ENCODE measurements at regions of chr1 and their contacts with region 1.

Region 1: GRCh38 chr1:229258031-229258756 is 12.7 kb upstream of the RAB4A start:
- DNase-seq: peak; percentile 24 to 82 (median 67)
- ATAC-seq: peak; percentile 25
- H3K4me3 ChIP-seq: no peak overlapping the region
- H3K4me3 Mint-ChIP-seq: peak overlapping the region; percentile 4
- H3K27ac ChIP-seq: peak overlapping the region in 1 of 2 experiments; percentile 33
- H3K27ac Mint-ChIP-seq: peak overlapping the region; percentile 80
- H3K4me1 ChIP-seq: peaks cover 25% of the 10 kb centered on the region
- H3K4me1 Mint-ChIP-seq: peaks cover 27% of the 10 kb centered on the region
- H3K27me3 ChIP-seq: no peaks in the 10 kb centered on the region
- H3K27me3 Mint-ChIP-seq: no peaks in the 10 kb centered on the region
- CTCF ChIP-seq: peak; percentile 93

Region 2: DNA sequence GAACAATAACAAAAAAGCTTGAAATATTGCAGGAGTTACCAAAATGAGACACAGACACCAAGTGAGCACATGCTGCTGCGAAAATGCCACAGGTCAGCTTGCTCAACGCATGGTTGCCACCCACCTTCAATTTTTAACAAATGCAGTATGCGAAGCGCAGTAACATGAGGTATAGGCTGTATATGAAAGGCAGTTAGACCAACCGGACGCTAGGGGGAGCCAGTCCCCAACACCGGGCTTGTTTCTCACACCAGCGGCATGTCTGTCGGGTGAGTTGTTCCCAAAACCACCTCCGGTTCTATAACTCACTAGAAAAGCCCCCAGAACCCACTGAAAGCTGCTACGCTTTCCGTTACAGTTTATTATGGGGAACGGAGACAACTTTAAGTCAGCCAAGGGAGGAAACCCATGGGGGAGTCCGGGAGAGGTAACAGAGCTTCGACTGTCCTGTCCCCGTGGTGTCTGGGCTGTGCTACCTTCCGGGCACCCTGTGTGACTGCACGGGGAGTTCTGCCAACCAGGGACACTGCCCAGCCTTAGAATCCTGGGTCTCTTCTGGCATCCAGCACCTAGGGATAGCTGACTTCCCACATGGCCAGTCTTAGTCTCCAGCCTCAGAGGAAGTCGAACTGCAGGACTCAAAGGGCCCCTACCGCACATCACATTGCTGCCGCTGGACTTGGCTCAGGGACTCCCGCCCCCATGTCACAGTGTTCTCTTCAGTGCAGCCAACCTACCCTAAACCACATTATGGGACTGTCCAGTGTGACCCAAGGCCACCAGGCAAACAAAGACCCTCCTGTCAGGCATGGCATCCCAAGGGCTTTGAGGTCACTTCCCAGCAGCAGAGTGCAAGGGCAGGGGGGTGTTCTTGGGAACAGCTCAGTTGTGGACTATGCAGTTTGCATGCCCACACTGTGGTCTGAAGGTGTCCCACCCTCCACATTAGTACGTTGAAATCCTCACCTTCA is 757.0 kb before region 1 on chr1:
- CTCF ChIA-PET with region 1: interaction called, 6 read pairs
- POLR2A ChIA-PET with region 1: no interaction called
- intact Hi-C with region 1: loop called in 1 of 2 experiments (anchors 10 kb)
- DNase-seq: peak; percentile 77 to 95 (median 89)
- ATAC-seq: peak; percentile 99
- H3K4me3 ChIP-seq: peak overlapping the region; percentile 35 to 54
- H3K4me3 Mint-ChIP-seq: peak overlapping the region; percentile 73
- H3K27ac ChIP-seq: peak overlapping the region in 1 of 2 experiments; percentile 56
- H3K27ac Mint-ChIP-seq: peak overlapping the region; percentile 77
- H3K4me1 ChIP-seq: peaks cover 17% of the 10 kb centered on the region
- H3K4me1 Mint-ChIP-seq: peaks cover 24% of the 10 kb centered on the region
- H3K27me3 ChIP-seq: no peaks in the 10 kb centered on the region
- H3K27me3 Mint-ChIP-seq: peaks cover 3% of the 10 kb centered on the region
- CTCF ChIP-seq: peak; percentile 87

Region 3: GRCh38 chr1:228734881-228735801 is 523.1 kb before region 1 on chr1 and contains the start of gene RHOU:
- CTCF ChIA-PET with region 1: interaction called, 86 read pairs
- POLR2A ChIA-PET with region 1: interaction called, 5 read pairs
- intact Hi-C with region 1: loop called (anchors 1 to 10 kb)
- DNase-seq: peak; percentile 53 to 84 (median 67)
- ATAC-seq: peak; percentile 87
- H3K4me3 ChIP-seq: peak within 1 kb of the TSS; percentile 44 to 68
- H3K4me3 Mint-ChIP-seq: peak within 1 kb of the TSS; percentile 87
- H3K27ac ChIP-seq: peak within 1 kb of the TSS in 1 of 2 experiments; percentile 33
- H3K27ac Mint-ChIP-seq: peak within 1 kb of the TSS; percentile 49
- H3K4me1 ChIP-seq: peaks cover 4% of the 10 kb centered on the region
- H3K4me1 Mint-ChIP-seq: peaks cover 21% of the 10 kb centered on the region
- H3K27me3 ChIP-seq: no peaks in the 10 kb centered on the region
- H3K27me3 Mint-ChIP-seq: peaks cover 8% of the 10 kb centered on the region
- CTCF ChIP-seq: peak; percentile 73
- total RNA-seq, gene RHOU: 0.39 to 0.57 TPM

Region 4: GRCh38 chr1:229270547-229271447 is 12.6 kb after region 1 on chr1 and contains the start of gene RAB4A:
- CTCF ChIA-PET with region 1: interaction called, 21 read pairs
- POLR2A ChIA-PET with region 1: interaction called, 3 read pairs
- intact Hi-C with region 1: no loop called
- DNase-seq: peak; percentile 44 to 90 (median 71)
- ATAC-seq: peak; percentile 86
- H3K4me3 ChIP-seq: peak within 1 kb of the TSS; percentile 70 to 84
- H3K4me3 Mint-ChIP-seq: peak within 1 kb of the TSS; percentile 98
- H3K27ac ChIP-seq: peak within 1 kb of the TSS; percentile 45 to 57
- H3K27ac Mint-ChIP-seq: peak within 1 kb of the TSS; percentile 83
- H3K4me1 ChIP-seq: peaks cover 31% of the 10 kb centered on the region
- H3K4me1 Mint-ChIP-seq: peaks cover 37% of the 10 kb centered on the region
- H3K27me3 ChIP-seq: no peaks in the 10 kb centered on the region
- H3K27me3 Mint-ChIP-seq: no peaks in the 10 kb centered on the region
- CTCF ChIP-seq: no peak
- total RNA-seq, gene RAB4A: 26.7 to 29.7 TPM

Region 5: DNA sequence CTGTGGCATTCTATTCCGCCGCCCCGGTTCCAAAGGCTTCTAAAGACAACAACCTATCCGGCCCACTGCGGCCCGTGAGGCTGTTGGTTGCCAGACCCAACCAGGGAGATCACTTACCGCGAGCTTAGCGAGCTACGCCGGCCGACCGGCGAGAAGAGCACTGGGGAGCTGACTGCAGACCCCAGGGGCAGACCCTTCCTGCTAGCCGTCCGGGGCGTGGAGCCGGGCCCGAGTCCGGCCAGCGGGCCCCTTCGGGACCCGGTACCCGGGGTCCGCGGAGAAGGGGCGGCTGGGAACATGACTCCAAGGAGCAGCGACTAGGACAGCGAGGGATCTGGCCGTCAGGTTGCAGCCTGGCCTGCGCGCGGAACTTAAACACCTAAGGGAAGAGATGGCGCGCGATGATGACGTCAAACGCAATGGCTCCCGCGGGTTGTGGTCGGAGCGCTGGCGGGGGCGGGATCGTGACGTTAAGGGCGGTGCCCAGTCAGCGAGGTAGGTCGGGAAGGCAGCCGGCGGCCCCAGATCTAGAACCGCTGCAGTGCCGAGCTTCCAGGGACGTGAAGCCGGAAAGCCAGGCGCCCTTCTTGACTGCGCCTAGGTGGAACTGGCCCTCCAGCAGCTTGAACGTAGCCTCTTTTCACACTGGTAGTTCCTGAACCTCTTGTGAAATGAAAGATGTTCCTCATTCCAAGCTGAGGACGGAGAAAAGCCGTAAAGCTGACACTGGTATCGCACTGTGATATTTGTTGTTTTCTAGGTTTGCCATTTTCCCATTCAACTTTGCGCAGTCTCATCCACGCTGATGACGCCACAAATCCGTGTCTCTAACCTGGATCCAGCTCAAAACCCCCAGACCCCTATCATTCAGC is 250.0 kb after region 1 on chr1 and contains the start of gene NUP133:
- CTCF ChIA-PET with region 1: interaction called, 10 read pairs
- POLR2A ChIA-PET with region 1: interaction called, 3 read pairs
- intact Hi-C with region 1: loop called in 1 of 2 experiments (anchors 10 kb)
- DNase-seq: peak; percentile 96 to 100 (median 99)
- ATAC-seq: peak; percentile 94
- H3K4me3 ChIP-seq: peak within 1 kb of the TSS; percentile 94 to 99
- H3K4me3 Mint-ChIP-seq: peak within 1 kb of the TSS; percentile 87
- H3K27ac ChIP-seq: peak within 1 kb of the TSS; percentile 93 to 97
- H3K27ac Mint-ChIP-seq: peak within 1 kb of the TSS; percentile 99
- H3K4me1 ChIP-seq: peaks cover 20% of the 10 kb centered on the region
- H3K4me1 Mint-ChIP-seq: peaks cover 29% of the 10 kb centered on the region
- H3K27me3 ChIP-seq: no peaks in the 10 kb centered on the region
- H3K27me3 Mint-ChIP-seq: no peaks in the 10 kb centered on the region
- CTCF ChIP-seq: no peak
- total RNA-seq, gene NUP133: 49.0 to 50.7 TPM

Region 6: GRCh38 chr1:230310381-230311163 is 1052.4 kb after region 1 on chr1:
- CTCF ChIA-PET with region 1: interaction called, 4 read pairs
- POLR2A ChIA-PET with region 1: no interaction called
- intact Hi-C with region 1: loop called in 1 of 2 experiments (anchors 1 kb)
- DNase-seq: peak; percentile 22 to 83 (median 63)
- ATAC-seq: no peak
- H3K4me3 ChIP-seq: no peak overlapping the region
- H3K4me3 Mint-ChIP-seq: no peak overlapping the region
- H3K27ac ChIP-seq: no peak overlapping the region
- H3K27ac Mint-ChIP-seq: no peak overlapping the region
- H3K4me1 ChIP-seq: no peaks in the 10 kb centered on the region
- H3K4me1 Mint-ChIP-seq: peaks cover 5% of the 10 kb centered on the region
- H3K27me3 ChIP-seq: no peaks in the 10 kb centered on the region
- H3K27me3 Mint-ChIP-seq: peaks cover 2% of the 10 kb centered on the region
- CTCF ChIP-seq: peak; percentile 98